Activated T-helper 2 cell treated with anti-CD3 and anti-CD28 coated beads, Interferon-gamma antibody, Interleukin-2, Interleukin-4, amounts not matched to agents 10 μg/mL and 5 μg/mL and 100 μg/mL, durations not matched to agents 14 hours and 24 hours and 36 hours (primary cell): ENCODE measurements at regions of chr9 and their contacts with region 1.

Region 1: DNA sequence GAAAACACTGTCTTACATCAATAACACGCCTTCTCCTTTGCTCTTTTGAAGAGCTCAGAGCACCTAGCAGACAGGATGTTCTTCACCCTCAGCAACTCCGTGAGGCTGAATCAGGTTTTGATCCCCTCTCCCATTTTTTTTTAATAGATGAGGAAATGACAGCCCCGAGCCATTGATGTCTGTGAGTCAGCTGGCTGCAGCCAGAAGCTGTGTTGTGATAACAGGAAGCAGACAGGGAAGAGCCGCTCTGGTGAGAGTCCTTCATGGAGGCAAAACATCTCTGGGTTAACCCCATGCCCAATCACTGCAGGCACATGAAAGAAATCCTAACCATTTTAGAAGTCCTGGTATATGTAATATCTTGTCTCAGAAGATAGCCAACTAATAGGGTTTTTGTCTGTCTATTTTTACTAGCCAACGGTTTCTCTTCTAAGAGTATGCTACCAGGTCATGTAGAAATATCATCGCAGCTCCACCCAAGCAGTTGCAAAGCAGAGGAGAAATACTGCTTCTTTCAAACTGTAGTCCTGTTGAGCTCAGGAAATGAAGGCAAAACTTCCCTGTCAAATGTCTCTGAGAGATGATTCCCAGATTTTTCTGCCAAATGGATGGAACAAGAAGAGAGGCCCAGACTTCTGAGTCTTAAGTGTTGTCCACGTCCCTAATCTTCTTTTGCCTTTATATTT is 568.9 kb downstream of the CCDC171 start:
- DNase-seq: no peak
- H3K4me3 Mint-ChIP-seq: no peak overlapping the region
- H3K27ac Mint-ChIP-seq: no peak overlapping the region
- H3K4me1 Mint-ChIP-seq: peaks cover 11% of the 10 kb centered on the region
- H3K27me3 Mint-ChIP-seq: no peaks in the 10 kb centered on the region

Region 2: GRCh38 chr9:16030513-16031185 is 91.1 kb before region 1 on chr9:
- intact Hi-C with region 1: loop called (anchors 10 kb)
- DNase-seq: peak; percentile 10
- H3K4me3 Mint-ChIP-seq: no peak overlapping the region
- H3K27ac Mint-ChIP-seq: no peak overlapping the region
- H3K4me1 Mint-ChIP-seq: peaks cover 9% of the 10 kb centered on the region
- H3K27me3 Mint-ChIP-seq: peaks cover 14% of the 10 kb centered on the region

Region 3: GRCh38 chr9:16052757-16053530 is 68.8 kb before region 1 on chr9:
- intact Hi-C with region 1: loop called (anchors 5 kb)
- DNase-seq: no peak
- H3K4me3 Mint-ChIP-seq: no peak overlapping the region
- H3K27ac Mint-ChIP-seq: no peak overlapping the region
- H3K4me1 Mint-ChIP-seq: peaks cover under 1% of the 10 kb centered on the region
- H3K27me3 Mint-ChIP-seq: peaks cover 7% of the 10 kb centered on the region

Region 4: GRCh38 chr9:16171911-16172310 is 50.2 kb after region 1 on chr9:
- intact Hi-C with region 1: no loop called
- DNase-seq: no peak
- H3K4me3 Mint-ChIP-seq: no peak overlapping the region
- H3K27ac Mint-ChIP-seq: no peak overlapping the region
- H3K4me1 Mint-ChIP-seq: no peaks in the 10 kb centered on the region
- H3K27me3 Mint-ChIP-seq: no peaks in the 10 kb centered on the region